ENCODE measurements at regions of chr2 and their contacts with region 1.

Region 1: DNA sequence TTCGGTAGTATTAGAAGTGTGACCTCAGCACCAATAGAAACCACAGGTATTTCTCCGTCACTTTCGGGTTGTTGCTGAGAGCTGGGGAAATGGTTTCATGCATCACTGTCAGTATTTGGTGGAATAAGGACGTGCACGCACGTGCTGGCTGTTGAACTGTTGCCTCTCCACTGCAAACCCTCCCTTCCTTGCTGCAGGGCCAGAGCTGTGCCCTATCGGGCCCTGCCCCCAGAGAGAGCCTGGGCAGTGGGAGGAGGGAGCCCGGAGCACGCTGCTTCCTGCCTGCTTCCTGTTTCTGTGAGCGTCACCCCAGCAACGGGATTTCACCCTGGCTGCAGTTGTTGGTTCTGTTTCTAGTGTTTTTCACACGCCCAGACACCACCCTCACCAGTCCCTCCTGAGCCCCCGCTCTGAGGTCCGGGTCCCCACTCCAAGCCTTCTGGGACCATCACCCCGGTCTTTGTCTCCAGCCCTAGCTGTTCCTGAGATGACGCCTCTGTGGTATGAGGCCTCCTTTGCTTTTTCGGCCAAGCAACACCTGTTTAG is 47.4 kb downstream of the LRRFIP1 start:
- DNase-seq: peak; percentile 74 to 97 (median 86)
- ATAC-seq: peak; percentile 54
- H3K4me3 ChIP-seq: peak overlapping the region; percentile 37 to 63
- H3K4me3 Mint-ChIP-seq: peak overlapping the region; percentile 88
- H3K27ac ChIP-seq: peak overlapping the region; percentile 94
- H3K27ac Mint-ChIP-seq: peak overlapping the region; percentile 98
- H3K4me1 ChIP-seq: peaks cover 42% of the 10 kb centered on the region
- H3K4me1 Mint-ChIP-seq: peaks cover 52% of the 10 kb centered on the region
- H3K27me3 ChIP-seq: no peaks in the 10 kb centered on the region
- H3K27me3 Mint-ChIP-seq: no peaks in the 10 kb centered on the region
- CTCF ChIP-seq: no peak

Region 2: GRCh38 chr2:237434866-237435311 is 239.9 kb before region 1 on chr2:
- CTCF ChIA-PET with region 1: no interaction called
- POLR2A ChIA-PET with region 1: no interaction called
- intact Hi-C with region 1: loop called (anchors 5 to 10 kb)
- DNase-seq: peak; percentile 26 to 87 (median 78)
- ATAC-seq: peak; percentile 54
- H3K4me3 ChIP-seq: peak overlapping the region; percentile 22 to 56
- H3K4me3 Mint-ChIP-seq: peak overlapping the region; percentile 79
- H3K27ac ChIP-seq: peak overlapping the region; percentile 0 to 44
- H3K27ac Mint-ChIP-seq: peak overlapping the region; percentile 96
- H3K4me1 ChIP-seq: peaks cover 90% of the 10 kb centered on the region
- H3K4me1 Mint-ChIP-seq: peaks cover 86% of the 10 kb centered on the region
- H3K27me3 ChIP-seq: no peaks in the 10 kb centered on the region
- H3K27me3 Mint-ChIP-seq: no peaks in the 10 kb centered on the region
- CTCF ChIP-seq: no peak

Region 3: DNA sequence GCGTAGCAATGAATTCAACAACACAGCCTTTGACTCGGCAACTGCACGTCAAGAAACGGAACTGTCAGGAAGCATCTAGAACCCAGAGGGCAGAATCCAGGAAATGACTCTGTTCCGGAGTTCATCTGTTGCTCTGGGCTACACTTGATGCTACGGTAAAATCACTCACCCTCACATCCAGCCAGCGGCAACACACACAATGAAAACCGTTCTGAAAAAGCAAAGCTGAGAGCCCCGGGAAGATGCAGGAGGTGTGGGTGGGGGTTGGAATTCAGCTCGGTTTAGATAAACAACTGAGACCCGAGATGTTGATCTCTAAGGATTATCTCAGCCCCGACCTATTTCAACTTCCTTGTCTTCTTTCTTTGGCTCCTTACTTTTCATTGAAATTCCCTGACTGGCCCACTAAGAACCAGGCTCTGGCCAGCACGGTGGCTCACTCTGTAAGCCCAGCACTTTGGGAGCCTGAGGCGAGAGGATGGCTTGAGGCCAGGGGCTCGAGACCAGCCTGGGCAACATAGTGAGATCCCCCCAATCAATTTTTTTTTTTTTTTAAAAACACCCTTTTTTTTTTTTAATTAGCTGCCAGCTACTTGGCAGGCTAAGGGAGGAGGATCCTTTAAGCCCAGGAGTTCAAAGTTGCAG is 71.0 kb before region 1 on chr2:
- CTCF ChIA-PET with region 1: interaction called, 5 read pairs
- POLR2A ChIA-PET with region 1: interaction called, 3 read pairs
- intact Hi-C with region 1: loop called (anchors 1 to 5 kb)
- DNase-seq: peak; percentile 30 to 89 (median 65)
- ATAC-seq: peak; percentile 97
- H3K4me3 ChIP-seq: peak overlapping the region; percentile 23
- H3K4me3 Mint-ChIP-seq: peak overlapping the region; percentile 68
- H3K27ac ChIP-seq: peak overlapping the region; percentile 67 to 84
- H3K27ac Mint-ChIP-seq: peak overlapping the region; percentile 94
- H3K4me1 ChIP-seq: peaks cover 29% of the 10 kb centered on the region
- H3K4me1 Mint-ChIP-seq: peaks cover 26% of the 10 kb centered on the region
- H3K27me3 ChIP-seq: no peaks in the 10 kb centered on the region
- H3K27me3 Mint-ChIP-seq: no peaks in the 10 kb centered on the region
- CTCF ChIP-seq: no peak

Region 4: GRCh38 chr2:237700512-237701032 is 25.8 kb after region 1 on chr2:
- CTCF ChIA-PET with region 1: interaction called, 328 read pairs
- POLR2A ChIA-PET with region 1: interaction called, 119 read pairs
- intact Hi-C with region 1: loop called in 1 of 2 experiments (anchors 5 kb)
- DNase-seq: peak in 6 of 9 experiments; percentile 40 to 93 (median 80)
- ATAC-seq: peak; percentile 76
- H3K4me3 ChIP-seq: no peak overlapping the region
- H3K4me3 Mint-ChIP-seq: peak overlapping the region; percentile 80
- H3K27ac ChIP-seq: peak overlapping the region; percentile 42 to 70
- H3K27ac Mint-ChIP-seq: peak overlapping the region; percentile 94
- H3K4me1 ChIP-seq: peaks cover 99% of the 10 kb centered on the region
- H3K4me1 Mint-ChIP-seq: peaks cover 95% of the 10 kb centered on the region
- H3K27me3 ChIP-seq: no peaks in the 10 kb centered on the region
- H3K27me3 Mint-ChIP-seq: no peaks in the 10 kb centered on the region
- CTCF ChIP-seq: no peak

Region 5: GRCh38 chr2:237731663-237732062 is 56.9 kb after region 1 on chr2:
- CTCF ChIA-PET with region 1: interaction called, 31 read pairs
- POLR2A ChIA-PET with region 1: interaction called, 5 read pairs
- intact Hi-C with region 1: no loop called
- DNase-seq: peak in 2 of 9 experiments; percentile 36 to 40
- ATAC-seq: peak; percentile 73
- H3K4me3 ChIP-seq: no peak overlapping the region
- H3K4me3 Mint-ChIP-seq: no peak overlapping the region
- H3K27ac ChIP-seq: peak overlapping the region in 1 of 2 experiments; percentile 22
- H3K27ac Mint-ChIP-seq: peak overlapping the region; percentile 3
- H3K4me1 ChIP-seq: peaks cover 25% of the 10 kb centered on the region
- H3K4me1 Mint-ChIP-seq: peaks cover 65% of the 10 kb centered on the region
- H3K27me3 ChIP-seq: no peaks in the 10 kb centered on the region
- H3K27me3 Mint-ChIP-seq: no peaks in the 10 kb centered on the region
- CTCF ChIP-seq: no peak

Region 6: DNA sequence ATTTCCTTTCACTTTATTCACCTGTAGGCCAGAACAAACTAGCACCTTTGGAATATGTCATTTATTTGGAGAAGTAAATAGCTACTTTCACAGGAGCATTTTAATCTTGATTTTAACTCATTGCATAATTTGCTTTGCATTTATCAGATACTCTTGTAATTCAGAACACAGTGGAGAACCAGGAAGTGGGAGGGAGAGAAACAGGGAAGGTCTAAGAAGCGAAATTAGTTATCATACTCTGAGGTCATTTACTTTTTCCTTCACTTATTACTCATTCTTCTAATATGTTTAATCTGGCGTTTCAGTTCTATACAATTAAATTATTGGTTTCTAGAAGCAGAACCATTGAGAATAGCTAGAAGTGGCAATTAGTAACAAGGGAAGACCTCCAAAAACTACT is 144.4 kb after region 1 on chr2:
- CTCF ChIA-PET with region 1: no interaction called
- POLR2A ChIA-PET with region 1: no interaction called
- intact Hi-C with region 1: no loop called
- DNase-seq: no peak
- ATAC-seq: no peak
- H3K4me3 ChIP-seq: no peak overlapping the region
- H3K4me3 Mint-ChIP-seq: no peak overlapping the region
- H3K27ac ChIP-seq: no peak overlapping the region
- H3K27ac Mint-ChIP-seq: no peak overlapping the region
- H3K4me1 ChIP-seq: no peaks in the 10 kb centered on the region
- H3K4me1 Mint-ChIP-seq: no peaks in the 10 kb centered on the region
- H3K27me3 ChIP-seq: no peaks in the 10 kb centered on the region
- H3K27me3 Mint-ChIP-seq: no peaks in the 10 kb centered on the region
- CTCF ChIP-seq: no peak

Region 7: GRCh38 chr2:237966565-237967462 is 292.0 kb after region 1 on chr2 and contains the start of gene UBE2F:
- CTCF ChIA-PET with region 1: no interaction called
- POLR2A ChIA-PET with region 1: no interaction called
- intact Hi-C with region 1: loop called in 1 of 2 experiments (anchors 1 kb)
- DNase-seq: peak; percentile 95 to 98 (median 97)
- ATAC-seq: peak; percentile 96
- H3K4me3 ChIP-seq: peak within 1 kb of the TSS; percentile 61 to 86
- H3K4me3 Mint-ChIP-seq: peak within 1 kb of the TSS; percentile 85
- H3K27ac ChIP-seq: peak within 1 kb of the TSS; percentile 39 to 67
- H3K27ac Mint-ChIP-seq: peak within 1 kb of the TSS; percentile 84
- H3K4me1 ChIP-seq: peaks cover 38% of the 10 kb centered on the region
- H3K4me1 Mint-ChIP-seq: peaks cover 40% of the 10 kb centered on the region
- H3K27me3 ChIP-seq: no peaks in the 10 kb centered on the region
- H3K27me3 Mint-ChIP-seq: no peaks in the 10 kb centered on the region
- CTCF ChIP-seq: no peak
- total RNA-seq, gene UBE2F: 16.5 to 18.4 TPM

Region 8: GRCh38 chr2:238024986-238025385 is 350.2 kb after region 1 on chr2:
- CTCF ChIA-PET with region 1: no interaction called
- POLR2A ChIA-PET with region 1: no interaction called
- intact Hi-C with region 1: no loop called
- DNase-seq: peak in 3 of 9 experiments; percentile 17 to 33 (median 28)
- ATAC-seq: no peak
- H3K4me3 ChIP-seq: no peak overlapping the region
- H3K4me3 Mint-ChIP-seq: no peak overlapping the region
- H3K27ac ChIP-seq: no peak overlapping the region
- H3K27ac Mint-ChIP-seq: peak overlapping the region; percentile 41
- H3K4me1 ChIP-seq: no peaks in the 10 kb centered on the region
- H3K4me1 Mint-ChIP-seq: peaks cover 3% of the 10 kb centered on the region
- H3K27me3 ChIP-seq: no peaks in the 10 kb centered on the region
- H3K27me3 Mint-ChIP-seq: no peaks in the 10 kb centered on the region
- CTCF ChIP-seq: no peak

Measured in CD8-positive, alpha-beta T cell (primary cell).